ENCODE measurements at regions of chr5 and their contacts with region 1.

Region 1: GRCh38 chr5:180291943-180292831 is at the start of gene MAPK9:
- ATAC-seq: peak; percentile 74 to 90 (median 86)
- H3K4me3 ChIP-seq: peak within 1 kb of the TSS; percentile 64 to 97 (median 83)
- H3K27ac ChIP-seq: peak within 1 kb of the TSS; percentile 79 to 88
- H3K4me1 ChIP-seq: peaks cover 4 to 8% of the 10 kb centered on the region in 2 donors
- total RNA-seq, gene MAPK9: 11.3 to 31.3 (median 23.6) TPM

Region 2: GRCh38 chr5:180486636-180487149 is 194.5 kb after region 1 on chr5:
- in situ Hi-C with region 1: loop called in 2 of 9 experiments (anchors 10 to 25 kb)
- ATAC-seq: no peak
- H3K4me3 ChIP-seq: no peak overlapping the region
- H3K27ac ChIP-seq: no peak overlapping the region
- H3K4me1 ChIP-seq: peaks cover 6 to 14% of the 10 kb centered on the region in 2 donors

Region 3: DNA sequence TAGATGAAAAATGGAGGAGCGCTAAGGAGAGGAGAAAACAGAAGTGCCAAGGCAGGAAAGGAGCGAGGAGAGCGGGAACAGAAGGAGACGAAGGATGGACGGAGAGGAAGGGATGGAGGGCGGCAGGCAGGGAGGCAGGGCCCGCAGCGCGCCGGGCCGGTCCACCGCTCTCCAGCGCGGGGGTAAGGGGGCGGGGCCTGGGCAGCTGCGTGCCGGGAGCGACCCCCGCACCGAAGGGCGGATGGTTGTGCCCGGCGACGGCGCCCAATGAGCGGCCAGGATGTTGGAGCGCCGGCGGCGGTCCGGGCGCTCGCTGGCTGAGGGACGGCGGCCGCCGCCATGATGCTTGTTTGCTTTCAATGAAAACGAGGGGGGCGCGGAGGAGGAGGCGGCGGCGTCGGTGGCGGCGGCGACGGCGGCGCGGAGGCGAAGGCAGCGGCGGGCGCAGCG is 201.9 kb after region 1 on chr5 and contains the start of gene CNOT6:
- in situ Hi-C with region 1: loop called in 2 of 9 experiments (anchors 10 to 25 kb)
- ATAC-seq: peak; percentile 87 to 95 (median 91)
- H3K4me3 ChIP-seq: peak within 1 kb of the TSS; percentile 87 to 96 (median 95)
- H3K27ac ChIP-seq: peak within 1 kb of the TSS; percentile 96 to 98
- H3K4me1 ChIP-seq: peaks cover 18% of the 10 kb centered on the region in 2 donors
- total RNA-seq, gene CNOT6: 7.4 to 29.4 (median 20.2) TPM

Region 4: DNA sequence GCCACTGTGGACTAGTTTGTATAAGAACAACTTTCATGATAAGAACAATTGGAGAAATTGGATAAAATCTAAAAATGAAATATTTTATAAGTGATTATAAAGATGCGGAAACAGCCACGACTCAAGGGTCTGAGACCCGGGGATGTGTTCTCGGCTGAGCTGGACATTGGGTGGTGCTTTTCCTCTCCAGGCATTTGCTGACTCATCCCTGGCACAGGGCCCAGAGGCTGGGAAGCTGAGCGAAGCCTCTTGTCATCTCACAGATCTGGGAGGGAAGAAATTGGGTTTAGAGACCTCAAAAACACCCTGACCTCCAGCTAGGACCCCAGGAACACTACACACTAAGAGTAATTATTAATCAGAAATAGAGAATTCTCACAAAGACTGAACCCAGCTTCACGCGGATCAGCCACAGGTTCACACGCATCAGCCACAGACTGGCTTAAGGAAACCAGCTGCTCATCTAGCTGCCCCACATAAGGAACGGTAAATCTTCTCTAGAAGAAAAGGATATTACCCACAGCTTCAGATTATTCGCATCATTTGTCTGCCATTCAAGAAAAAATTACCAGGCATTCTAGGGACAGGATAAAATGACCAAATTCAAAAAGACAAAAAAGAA is 841.5 kb after region 1 on chr5:
- in situ Hi-C with region 1: no loop called
- ATAC-seq: peak in 2 of 8 experiments; percentile 98
- H3K4me3 ChIP-seq: no peak overlapping the region
- H3K27ac ChIP-seq: no peak overlapping the region
- H3K4me1 ChIP-seq: no peaks in the 10 kb centered on the region